Activated naive CD4-positive, alpha-beta T cell treated with anti-CD3 and anti-CD28 coated beads, Interleukin-2, amount 10 ng/mL, durations not matched to agents 7 days and 5 days (primary cell): ENCODE measurements at regions of chr7 and their contacts with region 1.

Region 1: GRCh38 chr7:72493850-72494661 is 81.9 kb upstream of the CALN1 start:
- DNase-seq: peak; percentile 57
- H3K4me3 Mint-ChIP-seq: no peak overlapping the region
- H3K27ac Mint-ChIP-seq: no peak overlapping the region
- H3K4me1 Mint-ChIP-seq: no peaks in the 10 kb centered on the region
- H3K27me3 Mint-ChIP-seq: no peaks in the 10 kb centered on the region

Region 2: DNA sequence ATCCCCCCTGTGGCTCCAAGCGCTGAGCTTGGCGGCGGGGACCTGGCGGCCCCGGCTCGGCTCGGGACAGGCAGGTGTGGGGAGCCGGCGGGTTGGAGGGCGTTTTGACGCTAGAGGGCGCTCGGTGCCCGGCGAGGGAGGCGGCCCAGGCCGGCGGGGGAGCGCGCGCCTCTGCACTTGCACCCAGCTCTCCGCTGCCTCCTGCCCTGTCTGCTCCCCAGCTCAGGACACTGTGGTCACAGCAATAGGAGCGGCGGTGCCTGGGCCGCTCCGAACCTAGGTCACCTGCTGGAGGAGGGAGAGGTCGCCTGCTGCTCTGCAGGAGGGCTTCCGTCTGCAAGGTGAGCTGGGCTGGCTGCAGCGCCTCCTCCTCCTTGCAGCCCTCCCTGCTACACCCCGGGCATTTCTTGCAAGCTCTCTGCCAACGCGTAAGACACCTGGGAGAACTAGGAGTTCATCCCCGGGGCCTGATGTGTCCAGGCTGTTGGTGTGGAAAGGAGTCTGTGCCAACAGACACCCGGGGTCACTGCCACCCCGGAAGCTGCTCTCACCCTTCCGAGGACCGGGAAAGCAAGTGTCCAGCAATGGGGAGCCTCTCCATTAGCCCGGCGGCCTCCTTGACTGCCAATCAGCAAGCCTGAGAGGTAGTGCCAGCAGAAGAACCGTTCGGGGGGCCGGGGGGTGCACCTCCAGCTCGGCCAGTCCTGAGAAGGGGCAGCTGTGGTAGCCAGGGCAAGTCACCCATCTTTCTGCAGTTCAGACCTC is 741.7 kb before region 1 on chr7:
- CTCF ChIA-PET with region 1: interaction called, 13 read pairs
- DNase-seq: peak; percentile 44
- H3K4me3 Mint-ChIP-seq: no peak overlapping the region
- H3K27ac Mint-ChIP-seq: no peak overlapping the region
- H3K4me1 Mint-ChIP-seq: no peaks in the 10 kb centered on the region
- H3K27me3 Mint-ChIP-seq: peaks cover 4% of the 10 kb centered on the region